Activated CD8-positive, alpha-beta memory T cell treated with anti-CD3 and anti-CD28 coated beads, Interleukin-2, amount 10 ng/mL, durations not matched to agents 7 days and 5 days (primary cell): ENCODE measurements at regions of chr15 and their contacts with region 1.

Region 1: GRCh38 chr15:90886041-90886614 is 1.8 kb downstream of the FES start:
- DNase-seq: peak; percentile 86
- ATAC-seq: peak; percentile 44
- H3K4me3 Mint-ChIP-seq: peak overlapping the region; percentile 62
- H3K27ac Mint-ChIP-seq: peak overlapping the region; percentile 73
- H3K4me1 Mint-ChIP-seq: peaks cover 71% of the 10 kb centered on the region
- H3K27me3 Mint-ChIP-seq: no peaks in the 10 kb centered on the region

Region 2: GRCh38 chr15:90648137-90649070 is 237.7 kb before region 1 on chr15:
- CTCF ChIA-PET with region 1: interaction called, 36 read pairs
- DNase-seq: peak; percentile 95
- ATAC-seq: peak; percentile 84
- H3K4me3 Mint-ChIP-seq: peak overlapping the region; percentile 46
- H3K27ac Mint-ChIP-seq: peak overlapping the region; percentile 94
- H3K4me1 Mint-ChIP-seq: peaks cover 35% of the 10 kb centered on the region
- H3K27me3 Mint-ChIP-seq: no peaks in the 10 kb centered on the region

Region 3: DNA sequence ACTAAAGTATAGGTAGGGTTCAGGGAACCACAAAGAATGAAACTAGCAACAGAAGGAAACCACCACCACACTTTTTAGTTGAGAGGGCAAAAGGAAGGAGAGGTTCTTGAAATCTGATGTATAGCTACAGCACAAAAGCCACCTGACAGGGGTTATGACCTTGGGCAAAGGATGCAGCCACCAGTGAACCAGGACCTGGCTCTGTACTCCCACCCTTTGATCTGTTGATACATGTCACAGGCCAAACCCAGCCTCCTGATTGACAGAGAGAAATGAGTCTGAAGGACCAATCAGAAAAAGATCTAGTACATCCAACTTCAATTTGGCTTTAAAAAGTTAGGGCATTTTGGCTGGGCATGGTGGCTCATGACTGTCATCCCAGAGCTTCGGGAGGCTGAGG is 188.9 kb before region 1 on chr15:
- CTCF ChIA-PET with region 1: interaction called, 10 read pairs
- DNase-seq: peak; percentile 85
- ATAC-seq: peak; percentile 92
- H3K4me3 Mint-ChIP-seq: no peak overlapping the region
- H3K27ac Mint-ChIP-seq: peak overlapping the region; percentile 92
- H3K4me1 Mint-ChIP-seq: peaks cover 42% of the 10 kb centered on the region
- H3K27me3 Mint-ChIP-seq: no peaks in the 10 kb centered on the region

Region 4: GRCh38 chr15:90818251-90819210 is 67.6 kb before region 1 on chr15:
- CTCF ChIA-PET with region 1: interaction called, 34 read pairs
- DNase-seq: peak; percentile 65
- ATAC-seq: peak; percentile 23
- H3K4me3 Mint-ChIP-seq: peak overlapping the region; percentile 8
- H3K27ac Mint-ChIP-seq: peak overlapping the region; percentile 96
- H3K4me1 Mint-ChIP-seq: peaks cover 83% of the 10 kb centered on the region
- H3K27me3 Mint-ChIP-seq: no peaks in the 10 kb centered on the region

Region 5: GRCh38 chr15:90839187-90840071 is 46.7 kb before region 1 on chr15:
- CTCF ChIA-PET with region 1: interaction called, 12 read pairs
- DNase-seq: no peak
- ATAC-seq: no peak
- H3K4me3 Mint-ChIP-seq: peak overlapping the region; percentile 80
- H3K27ac Mint-ChIP-seq: peak overlapping the region; percentile 95
- H3K4me1 Mint-ChIP-seq: peaks cover 83% of the 10 kb centered on the region
- H3K27me3 Mint-ChIP-seq: no peaks in the 10 kb centered on the region

Region 6: GRCh38 chr15:90869601-90870353 is 16.4 kb before region 1 on chr15:
- CTCF ChIA-PET with region 1: interaction called, 20 read pairs
- DNase-seq: peak; percentile 70
- ATAC-seq: peak; percentile 37
- H3K4me3 Mint-ChIP-seq: peak overlapping the region; percentile 83
- H3K27ac Mint-ChIP-seq: peak overlapping the region; percentile 86
- H3K4me1 Mint-ChIP-seq: peaks cover 49% of the 10 kb centered on the region
- H3K27me3 Mint-ChIP-seq: no peaks in the 10 kb centered on the region